Psoas muscle (tissue), 8 donors: ENCODE measurements at regions of chr1 and their contacts with region 1.

Region 1: GRCh38 chr1:54397090-54397591 is 9.1 kb downstream of the SSBP3 start:
- DNase-seq: peak; percentile 59 to 87
- ATAC-seq: peak; percentile 74 to 81 (median 79)
- H3K4me3 ChIP-seq: peak overlapping the region; percentile 19
- H3K27ac ChIP-seq: peak overlapping the region; percentile 71
- H3K4me1 ChIP-seq: peaks cover 86% of the 10 kb centered on the region
- H3K27me3 ChIP-seq: no peaks in the 10 kb centered on the region
- CTCF ChIP-seq: no peak

Region 2: DNA sequence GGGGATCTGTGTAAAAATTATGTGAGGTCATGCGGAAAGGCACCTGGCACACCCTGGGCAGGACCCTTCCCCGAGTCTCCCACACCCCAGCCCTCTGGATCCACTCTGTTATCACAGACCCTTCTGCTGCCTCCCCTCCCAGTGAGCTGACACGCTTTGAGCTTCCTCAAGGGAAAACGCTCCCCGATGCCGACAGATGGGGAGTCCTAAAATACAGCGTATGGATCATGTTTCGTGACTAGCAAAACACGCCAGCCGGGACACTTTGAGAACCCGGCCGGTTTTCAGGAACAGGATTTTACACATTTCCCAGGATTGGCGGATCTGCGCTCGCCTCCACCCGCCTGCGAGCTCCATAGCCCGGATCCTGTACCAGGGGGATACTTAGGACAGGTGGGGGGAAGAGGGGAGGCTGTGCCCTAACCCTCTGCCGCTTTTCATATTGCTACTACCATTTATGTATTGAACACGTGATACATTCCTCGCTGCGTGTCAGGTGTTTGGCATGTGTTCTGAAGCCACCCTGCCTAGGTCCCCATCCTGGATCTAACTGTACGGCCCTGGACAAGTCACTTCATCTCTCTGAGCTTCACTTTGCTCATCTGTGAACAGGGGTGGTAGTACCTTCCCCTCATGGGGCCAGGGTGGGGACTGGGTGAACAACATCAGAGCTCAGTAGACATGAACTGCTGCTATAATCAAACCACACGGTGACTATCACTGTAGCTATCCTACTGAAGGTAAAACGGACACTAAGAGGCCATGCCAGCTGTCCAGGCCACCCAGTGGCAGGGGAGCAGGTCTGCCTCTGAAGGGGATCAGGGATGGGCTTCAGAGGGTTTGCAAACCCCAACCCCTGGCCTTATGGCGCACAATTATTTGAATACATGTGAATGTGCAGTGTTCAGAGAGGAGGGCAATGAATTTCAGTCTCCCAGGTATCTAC is 54.1 kb before region 1 on chr1:
- intact Hi-C with region 1: loop called in 1 of 2 experiments (anchors 5 kb)
- DNase-seq: no peak
- ATAC-seq: peak; percentile 75 to 82 (median 82)
- H3K4me3 ChIP-seq: peak overlapping the region; percentile 56
- H3K27ac ChIP-seq: peak overlapping the region; percentile 80
- H3K4me1 ChIP-seq: peaks cover 51% of the 10 kb centered on the region
- H3K27me3 ChIP-seq: no peaks in the 10 kb centered on the region
- CTCF ChIP-seq: peak; percentile 48

Region 3: GRCh38 chr1:54882483-54882882 is 485.3 kb after region 1 on chr1:
- intact Hi-C with region 1: no loop called
- DNase-seq: no peak
- ATAC-seq: no peak
- H3K4me3 ChIP-seq: no peak overlapping the region
- H3K27ac ChIP-seq: peak overlapping the region; percentile 78
- H3K4me1 ChIP-seq: peaks cover 32% of the 10 kb centered on the region
- H3K27me3 ChIP-seq: no peaks in the 10 kb centered on the region
- CTCF ChIP-seq: no peak